PC-9 (cell line): ENCODE measurements at regions of chr7 and their contacts with region 1.

Region 1: DNA sequence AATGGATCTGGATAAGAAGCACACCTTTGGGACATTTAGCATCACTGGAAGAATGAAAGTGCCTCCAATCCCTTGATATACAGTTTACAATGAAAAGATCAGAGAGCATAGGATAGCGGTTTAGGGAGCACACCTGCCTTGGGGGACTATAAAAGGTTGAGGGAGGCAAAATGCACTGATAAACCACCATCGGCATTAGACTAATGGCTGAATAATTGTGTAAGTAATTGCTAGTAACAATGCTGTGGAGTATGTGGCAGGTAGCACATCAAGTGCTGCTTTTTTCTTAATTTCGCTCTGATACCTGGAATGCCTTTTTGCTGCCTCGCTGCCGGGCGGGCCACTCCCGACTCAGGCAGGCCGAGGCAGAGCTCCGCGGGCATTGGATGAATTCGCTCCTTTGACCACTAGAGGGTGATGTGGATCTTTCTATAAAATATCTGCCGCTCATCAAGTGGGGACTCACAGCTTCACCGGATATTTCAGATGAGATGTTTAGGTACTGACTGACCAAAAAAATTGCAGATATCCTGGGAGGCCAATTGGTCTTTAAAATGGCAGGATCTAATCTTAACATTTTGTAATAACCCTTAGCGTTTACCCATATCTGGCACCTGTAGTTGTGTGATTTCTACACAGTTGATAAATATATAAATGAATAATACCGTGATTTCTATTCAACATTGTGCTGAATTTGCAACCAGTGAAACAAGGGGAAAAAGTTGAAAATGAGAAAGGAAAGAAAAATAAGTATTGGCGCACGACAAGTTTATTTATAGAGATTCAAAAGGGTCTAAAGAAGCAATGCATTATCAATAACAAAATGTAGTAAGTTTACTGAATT is 116.8 kb upstream of the PRSS1 start:
- DNase-seq: peak; percentile 70 to 72
- H3K4me3 ChIP-seq: no peak overlapping the region
- H3K27ac ChIP-seq: no peak overlapping the region
- H3K4me1 ChIP-seq: no peaks in the 10 kb centered on the region
- H3K27me3 ChIP-seq: no peaks in the 10 kb centered on the region
- CTCF ChIP-seq: peak; percentile 93

Region 2: DNA sequence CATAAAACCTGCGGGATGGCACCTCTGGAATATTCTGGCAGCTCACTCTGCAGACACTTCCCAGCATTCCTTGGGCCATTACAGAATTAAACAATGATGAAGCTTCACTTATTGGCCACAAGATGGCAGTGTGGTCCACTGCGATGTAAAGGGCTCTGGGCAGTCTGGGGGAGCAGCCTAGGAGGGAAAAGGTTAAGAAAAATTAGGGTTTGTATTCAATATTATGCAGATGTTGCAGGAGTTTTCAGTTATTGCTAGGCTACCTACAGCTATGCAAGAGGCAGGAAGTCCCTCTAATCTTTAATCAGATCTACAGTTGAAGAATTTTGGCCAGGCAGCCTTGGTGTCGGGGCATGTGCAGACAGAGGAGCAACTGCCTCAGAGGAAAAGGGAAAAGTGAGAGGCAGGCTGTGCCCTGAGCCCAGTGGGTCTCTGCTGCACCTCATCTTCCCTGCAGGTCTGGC is 116.4 kb before region 1 on chr7:
- CTCF ChIA-PET with region 1: no interaction called
- POLR2A ChIA-PET with region 1: no interaction called
- intact Hi-C with region 1: loop called (anchors 1 kb)
- DNase-seq: peak; percentile 72 to 87
- H3K4me3 ChIP-seq: no peak overlapping the region
- H3K27ac ChIP-seq: peak overlapping the region; percentile 79
- H3K4me1 ChIP-seq: peaks cover 48% of the 10 kb centered on the region
- H3K27me3 ChIP-seq: no peaks in the 10 kb centered on the region
- CTCF ChIP-seq: peak; percentile 97

Region 3: DNA sequence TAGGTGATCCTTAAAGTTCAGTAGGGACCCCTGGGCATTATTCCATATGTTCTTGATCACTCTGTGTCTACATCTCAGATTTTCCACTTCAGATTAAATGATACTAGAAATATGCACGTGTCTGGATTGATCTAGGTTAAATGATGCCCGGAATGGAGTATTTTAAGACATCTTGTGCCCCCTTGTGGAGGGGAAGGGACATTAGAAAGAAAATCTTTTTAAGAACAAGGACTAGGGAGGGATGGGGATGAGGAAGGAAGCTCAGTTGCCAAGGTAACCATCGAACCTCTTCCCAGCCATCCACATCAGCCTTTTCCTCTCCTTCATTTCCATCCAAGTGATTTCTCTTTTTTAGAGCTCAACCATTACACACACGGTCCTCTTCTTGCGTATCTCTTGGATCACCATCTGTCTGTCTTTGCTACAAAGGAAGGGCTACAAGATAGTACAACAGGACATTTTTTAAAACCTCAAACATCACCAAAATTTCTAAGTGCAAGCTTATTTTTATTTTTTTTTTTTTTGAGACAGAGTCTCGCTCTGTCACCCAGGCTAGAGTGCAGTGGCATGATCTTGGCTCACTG is 178.7 kb after region 1 on chr7:
- CTCF ChIA-PET with region 1: interaction called, 7 read pairs
- POLR2A ChIA-PET with region 1: no interaction called
- intact Hi-C with region 1: loop called (anchors 1 kb)
- DNase-seq: peak; percentile 22 to 78
- H3K4me3 ChIP-seq: no peak overlapping the region
- H3K27ac ChIP-seq: peak overlapping the region; percentile 96
- H3K4me1 ChIP-seq: peaks cover 84% of the 10 kb centered on the region
- H3K27me3 ChIP-seq: no peaks in the 10 kb centered on the region
- CTCF ChIP-seq: peak; percentile 95

Region 4: GRCh38 chr7:142866361-142867058 is 234.0 kb after region 1 on chr7:
- CTCF ChIA-PET with region 1: interaction called, 4 read pairs
- POLR2A ChIA-PET with region 1: interaction called, 3 read pairs
- intact Hi-C with region 1: loop called (anchors 5 kb)
- DNase-seq: peak; percentile 36 to 59
- H3K4me3 ChIP-seq: no peak overlapping the region
- H3K27ac ChIP-seq: no peak overlapping the region
- H3K4me1 ChIP-seq: no peaks in the 10 kb centered on the region
- H3K27me3 ChIP-seq: no peaks in the 10 kb centered on the region
- CTCF ChIP-seq: peak; percentile 83